ENCODE measurements at regions of chr16 and their contacts with region 1.

Region 1: GRCh38 chr16:68704232-68704867 is 32.7 kb upstream of the CDH1 start:
- DNase-seq: peak; percentile 82
- H3K4me3 Mint-ChIP-seq: no peak overlapping the region
- H3K27ac Mint-ChIP-seq: no peak overlapping the region
- H3K4me1 Mint-ChIP-seq: peaks cover 11% of the 10 kb centered on the region
- H3K27me3 Mint-ChIP-seq: peaks cover 3% of the 10 kb centered on the region

Region 2: GRCh38 chr16:68737046-68737729 is 32.8 kb after region 1 on chr16 and contains the start of gene CDH1:
- CTCF ChIA-PET with region 1: no interaction called
- POLR2A ChIA-PET with region 1: no interaction called
- intact Hi-C with region 1: loop called (anchors 5 kb)
- DNase-seq: peak; percentile 41
- H3K4me3 Mint-ChIP-seq: peak within 1 kb of the TSS; percentile 63
- H3K27ac Mint-ChIP-seq: no peak within 1 kb of the TSS
- H3K4me1 Mint-ChIP-seq: peaks cover 12% of the 10 kb centered on the region
- H3K27me3 Mint-ChIP-seq: peaks cover 26% of the 10 kb centered on the region
- total RNA-seq, gene CDH1: 2.4 to 3.1 TPM

Region 3: DNA sequence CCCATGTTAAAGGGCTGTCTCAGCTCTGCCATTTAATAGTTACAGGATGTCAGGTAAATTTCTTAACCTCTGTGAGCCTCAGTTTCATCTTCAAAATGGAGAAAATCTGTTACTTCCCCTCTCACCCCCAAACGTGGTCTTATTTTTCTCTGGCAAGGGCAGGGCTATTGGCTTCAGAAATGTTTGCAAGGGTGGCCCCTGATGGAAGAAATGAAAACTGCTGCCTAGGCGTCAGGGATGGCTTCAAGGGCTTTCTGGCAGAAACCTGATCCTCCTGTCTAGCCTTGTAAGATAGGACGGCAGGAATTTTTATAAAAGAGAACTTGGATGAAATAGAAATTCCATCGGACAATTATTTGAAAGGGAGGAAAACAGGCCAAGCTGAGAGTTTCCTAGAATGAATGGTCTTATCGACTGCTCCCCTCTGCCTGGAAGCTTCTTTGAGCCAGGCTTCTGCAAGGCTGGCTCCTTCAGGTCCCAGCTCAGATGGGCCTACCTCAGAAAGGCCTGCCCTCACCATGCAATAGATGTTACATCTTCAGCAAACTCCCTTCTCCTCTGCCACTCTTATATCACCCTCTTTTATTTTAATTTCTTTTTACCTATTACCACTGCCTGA is 96.0 kb after region 1 on chr16:
- CTCF ChIA-PET with region 1: interaction called, 29 read pairs
- POLR2A ChIA-PET with region 1: no interaction called
- intact Hi-C with region 1: loop called (anchors 1 kb)
- DNase-seq: peak; percentile 81
- H3K4me3 Mint-ChIP-seq: no peak overlapping the region
- H3K27ac Mint-ChIP-seq: no peak overlapping the region
- H3K4me1 Mint-ChIP-seq: peaks cover 7% of the 10 kb centered on the region
- H3K27me3 Mint-ChIP-seq: peaks cover 2% of the 10 kb centered on the region

Measured in activated CD4-positive, alpha-beta memory T cell treated with anti-CD3 and anti-CD28 coated beads for 36 hours (primary cell).